Heart left ventricle (tissue), 16 donors: ENCODE measurements at regions of chr1 and their contacts with region 1.

Region 1: GRCh38 chr1:64231153-64231552 is 27.7 kb downstream of the UBE2U start:
- DNase-seq: no peak
- ATAC-seq: no peak
- H3K4me3 ChIP-seq: no peak overlapping the region
- H3K27ac ChIP-seq: no peak overlapping the region
- H3K4me1 ChIP-seq: no peaks in the 10 kb centered on the region
- H3K27me3 ChIP-seq: peaks cover 0 to 19% (median 0%) of the 10 kb centered on the region in 9 donors
- CTCF ChIP-seq: no peak
- POLR2A ChIP-seq: no peak

Region 2: GRCh38 chr1:64082459-64082858 is 148.7 kb before region 1 on chr1:
- intact Hi-C with region 1: no loop called
- DNase-seq: no peak
- ATAC-seq: peak in 2 of 4 donors; percentile 36 to 52
- H3K4me3 ChIP-seq: no peak overlapping the region
- H3K27ac ChIP-seq: no peak overlapping the region
- H3K4me1 ChIP-seq: peaks cover 0 to 34% (median 7%) of the 10 kb centered on the region in 12 donors
- H3K27me3 ChIP-seq: no peaks in the 10 kb centered on the region
- CTCF ChIP-seq: no peak
- POLR2A ChIP-seq: no peak

Region 3: DNA sequence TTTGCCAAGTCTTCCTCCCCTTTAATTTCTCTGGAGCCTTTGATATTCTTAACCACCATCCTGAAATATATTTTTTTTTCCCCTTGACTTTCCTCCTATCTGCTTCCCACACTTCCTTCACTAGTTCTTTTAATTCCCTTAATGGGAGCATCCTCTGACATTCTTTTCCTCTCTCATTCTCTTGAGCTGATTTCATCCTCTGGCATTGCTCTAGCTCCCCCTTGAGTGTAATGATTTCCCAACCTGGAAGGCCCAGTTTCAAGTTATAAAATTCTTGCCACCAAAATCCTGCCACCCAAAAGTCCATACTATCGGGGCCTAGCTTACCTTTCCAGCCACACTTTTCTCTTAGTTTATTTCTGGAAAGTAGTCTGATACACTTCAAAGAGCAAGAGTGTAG is 67.2 kb before region 1 on chr1:
- intact Hi-C with region 1: loop called in 1 of 10 experiments (anchors 10 kb)
- DNase-seq: no peak
- ATAC-seq: peak in 3 of 4 donors; percentile 55 to 69 (median 58)
- H3K4me3 ChIP-seq: no peak overlapping the region
- H3K27ac ChIP-seq: peak overlapping the region in 2 of 12 donors; percentile 32 to 42
- H3K4me1 ChIP-seq: peaks cover 0 to 17% (median 3%) of the 10 kb centered on the region in 12 donors
- H3K27me3 ChIP-seq: no peaks in the 10 kb centered on the region
- CTCF ChIP-seq: peak in 8 of 12 donors; percentile 22 to 49 (median 38)
- POLR2A ChIP-seq: no peak

Region 4: GRCh38 chr1:64282354-64282753 is 51.2 kb after region 1 on chr1:
- intact Hi-C with region 1: no loop called
- DNase-seq: peak in 1 of 5 donors; percentile 29
- ATAC-seq: no peak
- H3K4me3 ChIP-seq: no peak overlapping the region
- H3K27ac ChIP-seq: no peak overlapping the region
- H3K4me1 ChIP-seq: peaks cover 0 to 6% (median 0%) of the 10 kb centered on the region in 12 donors
- H3K27me3 ChIP-seq: no peaks in the 10 kb centered on the region
- CTCF ChIP-seq: no peak
- POLR2A ChIP-seq: no peak